ENCODE measurements at regions of chr3 and their contacts with region 1.

Region 1: GRCh38 chr3:16290007-16290826 is 25.2 kb downstream of the OXNAD1 start:
- H3K4me3 ChIP-seq: no peak overlapping the region
- H3K27ac ChIP-seq: no peak overlapping the region
- H3K4me1 ChIP-seq: no peaks in the 10 kb centered on the region
- CTCF ChIP-seq: peak; percentile 49; the same call in 1 of the 2 replicates

Region 2: GRCh38 chr3:15953841-15954240 is 336.4 kb before region 1 on chr3:
- CTCF ChIA-PET with region 1: no interaction called
- POLR2A ChIA-PET with region 1: no interaction called
- H3K4me3 ChIP-seq: no peak overlapping the region
- H3K27ac ChIP-seq: no peak overlapping the region
- H3K4me1 ChIP-seq: no peaks in the 10 kb centered on the region
- CTCF ChIP-seq: no peak

Region 3: GRCh38 chr3:16264708-16265454 is 25.3 kb before region 1 on chr3 and contains the starts of genes DPH3 and OXNAD1:
- CTCF ChIA-PET with region 1: interaction called, 10 read pairs
- POLR2A ChIA-PET with region 1: no interaction called
- H3K4me3 ChIP-seq: peak within 1 kb of the TSS; percentile 93
- H3K27ac ChIP-seq: peak within 1 kb of the TSS; percentile 47; the same call in 1 of the 2 replicates
- H3K4me1 ChIP-seq: no peaks in the 10 kb centered on the region
- CTCF ChIP-seq: 0 out of 2 replicates have a peak, but pooled peaks have one; percentile 24

Region 4: GRCh38 chr3:16313886-16314645 is 23.8 kb after region 1 on chr3:
- CTCF ChIA-PET with region 1: interaction called, 10 read pairs
- POLR2A ChIA-PET with region 1: no interaction called
- H3K4me3 ChIP-seq: no peak overlapping the region
- H3K27ac ChIP-seq: no peak overlapping the region
- H3K4me1 ChIP-seq: no peaks in the 10 kb centered on the region
- CTCF ChIP-seq: no peak

Region 5: DNA sequence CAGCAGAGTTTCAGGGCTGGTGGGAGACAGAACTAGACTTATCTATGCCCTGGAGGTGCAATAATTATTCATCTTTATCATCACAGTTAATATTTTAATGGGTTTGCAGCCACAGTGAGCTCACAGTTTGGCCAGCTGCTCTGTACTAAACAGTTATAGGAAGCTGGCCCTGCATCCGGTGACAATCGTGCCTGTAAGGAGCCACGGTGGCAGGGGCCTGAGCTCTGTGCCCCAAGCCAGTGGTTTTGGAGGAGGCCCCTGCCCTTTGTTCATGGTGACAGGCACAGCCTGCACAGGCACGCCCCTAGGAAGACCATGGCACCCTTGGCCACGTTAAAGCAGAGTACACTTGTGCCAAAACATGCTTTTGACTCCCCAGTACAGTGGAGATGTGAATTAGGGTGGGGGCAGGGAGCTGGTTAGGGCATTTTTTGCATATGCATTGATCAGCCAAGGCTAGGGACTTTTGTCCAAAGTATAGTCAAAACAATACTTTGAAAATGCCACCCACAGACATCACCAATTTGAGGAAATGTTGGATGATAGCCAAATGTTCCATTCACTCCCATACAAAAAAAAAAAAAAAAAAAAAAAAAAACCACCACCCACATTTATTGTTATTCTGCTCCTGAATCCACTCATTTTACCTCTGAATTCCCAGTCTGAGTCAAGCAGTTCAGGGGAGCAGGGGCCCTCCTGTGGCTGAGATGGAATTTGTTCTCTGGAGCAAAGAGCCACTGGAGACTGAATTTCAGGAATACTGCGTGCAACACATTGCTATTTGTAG is 226.7 kb after region 1 on chr3:
- CTCF ChIA-PET with region 1: interaction called, 29 read pairs
- POLR2A ChIA-PET with region 1: no interaction called
- H3K4me3 ChIP-seq: no peak overlapping the region
- H3K27ac ChIP-seq: no peak overlapping the region
- H3K4me1 ChIP-seq: peaks cover 24% of the 10 kb centered on the region
- CTCF ChIP-seq: 0 out of 2 replicates have a peak, but pooled peaks have one; percentile 22

Region 6: GRCh38 chr3:16550676-16551341 is 260.6 kb after region 1 on chr3:
- CTCF ChIA-PET with region 1: interaction called, 67 read pairs
- POLR2A ChIA-PET with region 1: no interaction called
- H3K4me3 ChIP-seq: no peak overlapping the region
- H3K27ac ChIP-seq: no peak overlapping the region
- H3K4me1 ChIP-seq: no peaks in the 10 kb centered on the region
- CTCF ChIP-seq: peak; percentile 85

Region 7: GRCh38 chr3:16600780-16601539 is 310.7 kb after region 1 on chr3:
- CTCF ChIA-PET with region 1: interaction called, 10 read pairs
- POLR2A ChIA-PET with region 1: no interaction called
- H3K4me3 ChIP-seq: no peak overlapping the region
- H3K27ac ChIP-seq: no peak overlapping the region
- H3K4me1 ChIP-seq: no peaks in the 10 kb centered on the region
- CTCF ChIP-seq: peak; percentile 40; the same call in 1 of the 2 replicates